GM12878 (cell line): ENCODE measurements at regions of chr4 and their contacts with region 1.

Region 1: GRCh38 chr4:41214136-41214824 is at the start of gene APBB2:
- DNase-seq: peak; percentile 49
- ATAC-seq: peak; percentile 78
- H3K4me3 ChIP-seq: peak within 1 kb of the TSS; percentile 83
- H3K27ac ChIP-seq: peak within 1 kb of the TSS; percentile 71; the same call in 1 of the 2 replicates
- H3K4me1 ChIP-seq: no peaks in the 10 kb centered on the region; the same call in 1 of the 2 replicates
- H3K27me3 ChIP-seq: no peaks in the 10 kb centered on the region
- CTCF ChIP-seq: peak; percentile 56 to 86 (median 77)
- EP300 ChIP-seq: no peak
- POLR2A ChIP-seq: peak; percentile 79
- RAD21 ChIP-seq: peak; percentile 65
- polyA plus RNA-seq, gene APBB2: 2.7 to 3.1 TPM

Region 2: GRCh38 chr4:40908702-40909362 is 305.4 kb before region 1 on chr4:
- CTCF ChIA-PET with region 1: interaction called, 6 read pairs
- POLR2A ChIA-PET with region 1: no interaction called
- RAD21 ChIA-PET with region 1: interaction called, 3 read pairs
- SMC1A ChIA-PET with region 1: no interaction called
- in situ Hi-C with region 1: no loop called
- intact Hi-C with region 1: loop called (anchors 1 kb)
- DNase-seq: peak; percentile 40
- ATAC-seq: peak; percentile 99
- H3K4me3 ChIP-seq: no peak overlapping the region
- H3K27ac ChIP-seq: no peak overlapping the region
- H3K4me1 ChIP-seq: peaks cover 4% of the 10 kb centered on the region; the same call in 1 of the 2 replicates
- H3K27me3 ChIP-seq: no peaks in the 10 kb centered on the region
- CTCF ChIP-seq: peak; percentile 92 to 97 (median 93)
- EP300 ChIP-seq: no peak
- POLR2A ChIP-seq: no peak
- RAD21 ChIP-seq: peak; percentile 82

Region 3: GRCh38 chr4:40984051-40984450 is 230.2 kb before region 1 on chr4:
- CTCF ChIA-PET with region 1: interaction called, 567 read pairs
- POLR2A ChIA-PET with region 1: interaction called, 5 read pairs
- RAD21 ChIA-PET with region 1: interaction called, 262 read pairs
- SMC1A ChIA-PET with region 1: interaction called, 362 read pairs
- in situ Hi-C with region 1: loop called (anchors 5 kb)
- intact Hi-C with region 1: loop called (anchors 1 kb)
- DNase-seq: no peak
- ATAC-seq: no peak
- H3K4me3 ChIP-seq: no peak overlapping the region
- H3K27ac ChIP-seq: no peak overlapping the region
- H3K4me1 ChIP-seq: no peaks in the 10 kb centered on the region
- H3K27me3 ChIP-seq: no peaks in the 10 kb centered on the region
- CTCF ChIP-seq: no peak
- EP300 ChIP-seq: no peak
- POLR2A ChIP-seq: no peak
- RAD21 ChIP-seq: no peak

Region 4: GRCh38 chr4:41006141-41006540 is 208.1 kb before region 1 on chr4:
- CTCF ChIA-PET with region 1: interaction called, 3 read pairs
- POLR2A ChIA-PET with region 1: no interaction called
- RAD21 ChIA-PET with region 1: interaction called, 3 read pairs
- SMC1A ChIA-PET with region 1: interaction called, 20 read pairs
- in situ Hi-C with region 1: no loop called
- intact Hi-C with region 1: no loop called
- DNase-seq: no peak
- ATAC-seq: no peak
- H3K4me3 ChIP-seq: no peak overlapping the region
- H3K27ac ChIP-seq: no peak overlapping the region
- H3K4me1 ChIP-seq: no peaks in the 10 kb centered on the region
- H3K27me3 ChIP-seq: no peaks in the 10 kb centered on the region
- CTCF ChIP-seq: no peak
- EP300 ChIP-seq: no peak
- POLR2A ChIP-seq: no peak
- RAD21 ChIP-seq: no peak

Region 5: GRCh38 chr4:41072021-41072777 is 142.1 kb before region 1 on chr4:
- CTCF ChIA-PET with region 1: interaction called, 11 read pairs
- POLR2A ChIA-PET with region 1: interaction called, 3 read pairs
- RAD21 ChIA-PET with region 1: interaction called, 12 read pairs
- SMC1A ChIA-PET with region 1: interaction called, 16 read pairs
- in situ Hi-C with region 1: no loop called
- intact Hi-C with region 1: loop called (anchors 5 kb)
- DNase-seq: peak; percentile 52
- ATAC-seq: peak; percentile 72
- H3K4me3 ChIP-seq: no peak overlapping the region
- H3K27ac ChIP-seq: peak overlapping the region; percentile 72
- H3K4me1 ChIP-seq: peaks cover 12% of the 10 kb centered on the region
- H3K27me3 ChIP-seq: no peaks in the 10 kb centered on the region
- CTCF ChIP-seq: no peak
- EP300 ChIP-seq: no peak
- POLR2A ChIP-seq: no peak
- RAD21 ChIP-seq: no peak

Region 6: DNA sequence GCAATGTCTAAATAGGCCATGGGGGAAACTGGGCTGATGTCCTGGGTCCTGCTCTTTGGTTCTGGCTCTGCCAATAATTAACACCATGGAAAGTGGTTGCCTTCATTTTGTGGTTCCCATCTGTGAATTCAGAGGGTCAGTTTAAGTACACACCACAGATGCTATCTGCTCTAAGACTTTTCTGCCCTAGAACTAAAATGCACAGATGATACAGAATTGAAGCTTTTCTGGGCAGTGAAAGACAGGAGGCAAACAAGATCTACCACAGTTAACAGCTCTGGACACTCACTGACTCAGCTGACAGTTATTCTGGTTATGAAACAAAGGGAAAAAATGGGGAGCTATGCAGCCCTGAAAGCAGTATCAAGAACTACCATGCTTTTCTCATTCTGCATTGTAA is 37.3 kb before region 1 on chr4:
- CTCF ChIA-PET with region 1: interaction called, 9 read pairs
- POLR2A ChIA-PET with region 1: no interaction called
- RAD21 ChIA-PET with region 1: interaction called, 26 read pairs
- SMC1A ChIA-PET with region 1: interaction called, 12 read pairs
- in situ Hi-C with region 1: no loop called
- intact Hi-C with region 1: no loop called
- DNase-seq: no peak
- ATAC-seq: peak; percentile 41
- H3K4me3 ChIP-seq: no peak overlapping the region
- H3K27ac ChIP-seq: peak overlapping the region; percentile 28; the same call in 1 of the 2 replicates
- H3K4me1 ChIP-seq: peaks cover 16% of the 10 kb centered on the region
- H3K27me3 ChIP-seq: no peaks in the 10 kb centered on the region
- CTCF ChIP-seq: no peak; a peak in 1 of 6 replicates
- EP300 ChIP-seq: no peak
- POLR2A ChIP-seq: no peak
- RAD21 ChIP-seq: no peak

Region 7: DNA sequence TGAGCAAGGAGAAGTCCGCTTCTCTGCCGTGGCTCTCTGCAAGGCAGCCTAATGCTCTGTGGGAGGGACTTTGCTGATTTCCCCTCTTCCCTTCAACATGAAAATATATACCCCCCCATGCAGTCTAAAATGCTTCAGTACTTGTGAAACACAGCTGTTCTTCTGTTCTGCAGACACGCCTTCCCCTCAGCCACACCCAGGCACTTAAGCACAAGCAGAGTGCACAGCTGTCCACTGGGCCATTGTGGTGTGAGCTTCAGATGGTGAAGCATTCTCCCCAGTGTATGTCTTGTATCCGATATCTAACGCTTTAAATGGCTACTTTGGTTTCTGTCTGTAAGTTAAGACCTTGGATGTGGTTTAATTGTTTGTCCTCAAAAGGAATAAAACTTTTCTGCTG is 53.7 kb after region 1 on chr4:
- CTCF ChIA-PET with region 1: no interaction called
- POLR2A ChIA-PET with region 1: no interaction called
- RAD21 ChIA-PET with region 1: no interaction called
- SMC1A ChIA-PET with region 1: no interaction called
- in situ Hi-C with region 1: no loop called
- intact Hi-C with region 1: no loop called
- DNase-seq: no peak
- ATAC-seq: no peak
- H3K4me3 ChIP-seq: no peak overlapping the region
- H3K27ac ChIP-seq: no peak overlapping the region
- H3K4me1 ChIP-seq: no peaks in the 10 kb centered on the region
- H3K27me3 ChIP-seq: no peaks in the 10 kb centered on the region
- CTCF ChIP-seq: no peak
- EP300 ChIP-seq: no peak
- POLR2A ChIP-seq: no peak
- RAD21 ChIP-seq: no peak